ENCODE measurements at regions of chr19 and their contacts with region 1.

Region 1: GRCh38 chr19:30682999-30683536 is 310.9 kb downstream of the ZNF536 start:
- DNase-seq: peak; percentile 74 to 95
- ATAC-seq: peak; percentile 62 to 89
- H3K4me3 ChIP-seq: no peak overlapping the region
- H3K27ac ChIP-seq: no peak overlapping the region
- H3K4me1 ChIP-seq: peaks cover 3% of the 10 kb centered on the region; the same call in 1 of the 3 replicates
- CTCF ChIP-seq: peak; percentile 98
- EP300 ChIP-seq: no peak
- POLR2A ChIP-seq: no peak
- RAD21 ChIP-seq: peak; percentile 98

Region 2: DNA sequence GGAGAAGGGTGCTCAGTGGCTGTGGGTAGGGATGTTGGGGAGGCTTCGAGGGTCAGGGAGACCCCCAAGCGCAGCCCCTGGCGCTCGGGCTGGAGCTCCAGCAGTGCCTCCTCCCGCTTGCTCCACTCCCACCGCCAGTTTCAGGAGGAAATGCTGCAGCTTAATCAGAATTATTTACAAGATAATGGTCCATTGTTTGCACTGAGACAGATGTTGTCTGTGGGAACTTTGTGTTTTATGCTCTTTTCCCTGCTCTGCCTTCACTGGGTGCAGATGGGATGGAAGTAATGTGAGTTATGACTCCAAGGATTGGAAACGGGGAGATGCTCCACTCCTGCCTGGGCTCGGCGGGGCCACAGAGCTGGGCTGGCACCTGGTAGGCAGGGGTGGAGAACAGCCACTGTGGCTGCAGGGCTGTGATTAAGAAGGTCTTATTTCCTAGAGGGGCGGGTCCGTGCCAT is 118.5 kb before region 1 on chr19:
- CTCF ChIA-PET with region 1: no interaction called
- POLR2A ChIA-PET with region 1: no interaction called
- DNase-seq: no peak
- ATAC-seq: no peak
- H3K4me3 ChIP-seq: no peak overlapping the region
- H3K27ac ChIP-seq: no peak overlapping the region
- H3K4me1 ChIP-seq: no peaks in the 10 kb centered on the region
- CTCF ChIP-seq: no peak
- EP300 ChIP-seq: no peak
- POLR2A ChIP-seq: no peak
- RAD21 ChIP-seq: no peak

Region 3: GRCh38 chr19:30669329-30670010 is 13.6 kb before region 1 on chr19:
- CTCF ChIA-PET with region 1: interaction called, 298 read pairs
- POLR2A ChIA-PET with region 1: no interaction called
- DNase-seq: peak; percentile 61 to 66
- ATAC-seq: peak; percentile 61 to 88
- H3K4me3 ChIP-seq: no peak overlapping the region
- H3K27ac ChIP-seq: no peak overlapping the region
- H3K4me1 ChIP-seq: peaks cover 8% of the 10 kb centered on the region; the same call in 1 of the 3 replicates
- CTCF ChIP-seq: peak; percentile 96
- EP300 ChIP-seq: no peak
- POLR2A ChIP-seq: no peak
- RAD21 ChIP-seq: peak; percentile 88

Region 4: GRCh38 chr19:30703173-30703572 is 20.1 kb after region 1 on chr19:
- CTCF ChIA-PET with region 1: interaction called, 75 read pairs
- POLR2A ChIA-PET with region 1: no interaction called
- DNase-seq: no peak
- ATAC-seq: no peak
- H3K4me3 ChIP-seq: no peak overlapping the region
- H3K27ac ChIP-seq: no peak overlapping the region
- H3K4me1 ChIP-seq: no peaks in the 10 kb centered on the region
- CTCF ChIP-seq: no peak
- EP300 ChIP-seq: no peak
- POLR2A ChIP-seq: no peak
- RAD21 ChIP-seq: no peak

Region 5: GRCh38 chr19:30799865-30800755 is 117.0 kb after region 1 on chr19:
- CTCF ChIA-PET with region 1: interaction called, 15 read pairs
- POLR2A ChIA-PET with region 1: no interaction called
- DNase-seq: peak; percentile 38 to 83
- ATAC-seq: peak; percentile 61 to 94; a peak in 4 of 6 replicates
- H3K4me3 ChIP-seq: no peak overlapping the region
- H3K27ac ChIP-seq: no peak overlapping the region
- H3K4me1 ChIP-seq: no peaks in the 10 kb centered on the region
- CTCF ChIP-seq: peak; percentile 56
- EP300 ChIP-seq: no peak
- POLR2A ChIP-seq: no peak
- RAD21 ChIP-seq: peak; percentile 32 to 56; a peak in 4 of 5 replicates

Region 6: GRCh38 chr19:32231691-32232090 is 1548.6 kb after region 1 on chr19:
- CTCF ChIA-PET with region 1: interaction called, 74 read pairs
- POLR2A ChIA-PET with region 1: no interaction called
- DNase-seq: no peak
- ATAC-seq: no peak
- H3K4me3 ChIP-seq: no peak overlapping the region
- H3K27ac ChIP-seq: no peak overlapping the region
- H3K4me1 ChIP-seq: no peaks in the 10 kb centered on the region
- CTCF ChIP-seq: no peak
- EP300 ChIP-seq: no peak
- POLR2A ChIP-seq: no peak
- RAD21 ChIP-seq: no peak